ENCODE measurements at regions of chr13 and their contacts with region 1.

Region 1: GRCh38 chr13:26707122-26708006 is 53.2 kb downstream of the GPR12 start:
- DNase-seq: peak in 1 of 2 experiments; percentile 41
- H3K4me3 ChIP-seq: no peak overlapping the region
- H3K27ac ChIP-seq: no peak overlapping the region
- H3K4me1 ChIP-seq: peaks cover 1 to 10% (median 4%) of the 10 kb centered on the region in 4 experiments; a peak in 5 of 7 replicates
- H3K27me3 ChIP-seq: no peaks in the 10 kb centered on the region
- CTCF ChIP-seq: peak; percentile 41 to 92 (median 81)
- EP300 ChIP-seq: no peak
- POLR2A ChIP-seq: no peak
- RAD21 ChIP-seq: peak; percentile 96 to 97

Region 2: DNA sequence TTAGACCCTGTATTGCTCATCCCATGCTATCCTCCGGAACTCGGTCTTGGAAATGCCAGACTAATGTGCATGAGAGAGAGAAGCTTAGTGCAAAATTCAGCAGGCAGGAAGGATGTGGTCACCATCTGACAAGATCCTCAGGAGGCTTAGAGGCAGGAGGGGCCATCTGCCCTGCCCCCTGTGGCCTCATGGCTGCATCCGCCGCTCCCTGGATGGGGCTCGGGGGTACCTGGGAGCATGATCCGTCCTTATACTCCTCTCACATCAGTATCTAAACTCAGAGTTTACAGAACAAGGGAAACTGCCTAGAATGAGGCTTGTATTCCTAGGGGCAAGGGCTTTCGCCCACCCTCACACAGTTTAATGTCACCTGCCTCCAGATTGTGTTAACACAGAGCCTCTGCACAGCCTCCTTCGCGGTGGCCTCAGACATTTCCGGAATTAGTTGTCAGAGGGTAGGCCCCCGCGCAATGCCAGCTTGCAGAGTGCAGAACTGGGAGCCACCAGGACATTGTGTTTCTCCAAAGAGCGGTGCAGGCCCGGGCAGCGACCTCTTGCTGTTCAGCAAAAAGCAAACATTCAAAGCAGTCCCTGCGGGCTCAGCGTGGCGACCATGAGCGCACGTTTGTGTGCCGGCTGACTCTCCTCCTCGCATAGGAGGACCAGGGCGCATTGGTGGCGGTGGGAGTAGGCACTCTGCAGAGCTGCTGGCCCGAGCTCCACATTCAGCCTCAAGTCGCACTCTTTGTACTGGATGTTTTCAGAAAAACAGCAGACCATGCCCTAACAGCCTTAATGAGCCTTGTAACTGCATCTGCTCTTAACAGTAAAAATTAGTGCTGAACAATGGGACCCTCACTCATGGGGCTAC is 14.1 kb after region 1 on chr13:
- CTCF ChIA-PET with region 1: interaction called, 38 read pairs
- POLR2A ChIA-PET with region 1: no interaction called
- DNase-seq: no peak
- H3K4me3 ChIP-seq: no peak overlapping the region; a peak in 1 of 8 replicates
- H3K27ac ChIP-seq: no peak overlapping the region
- H3K4me1 ChIP-seq: no peaks in the 10 kb centered on the region
- H3K27me3 ChIP-seq: no peaks in the 10 kb centered on the region
- CTCF ChIP-seq: no peak
- EP300 ChIP-seq: no peak
- POLR2A ChIP-seq: no peak
- RAD21 ChIP-seq: no peak

Region 3: GRCh38 chr13:26749285-26749684 is 41.9 kb after region 1 on chr13:
- CTCF ChIA-PET with region 1: interaction called, 11 read pairs
- POLR2A ChIA-PET with region 1: no interaction called
- DNase-seq: no peak
- H3K4me3 ChIP-seq: no peak overlapping the region
- H3K27ac ChIP-seq: no peak overlapping the region
- H3K4me1 ChIP-seq: peaks cover 0 to 3% (median 0%) of the 10 kb centered on the region in 4 experiments; a peak in 2 of 7 replicates
- H3K27me3 ChIP-seq: peaks cover 0 to 3% (median 1%) of the 10 kb centered on the region in 4 experiments; a peak in 3 of 7 replicates
- CTCF ChIP-seq: no peak
- EP300 ChIP-seq: no peak
- POLR2A ChIP-seq: no peak
- RAD21 ChIP-seq: no peak

Region 4: DNA sequence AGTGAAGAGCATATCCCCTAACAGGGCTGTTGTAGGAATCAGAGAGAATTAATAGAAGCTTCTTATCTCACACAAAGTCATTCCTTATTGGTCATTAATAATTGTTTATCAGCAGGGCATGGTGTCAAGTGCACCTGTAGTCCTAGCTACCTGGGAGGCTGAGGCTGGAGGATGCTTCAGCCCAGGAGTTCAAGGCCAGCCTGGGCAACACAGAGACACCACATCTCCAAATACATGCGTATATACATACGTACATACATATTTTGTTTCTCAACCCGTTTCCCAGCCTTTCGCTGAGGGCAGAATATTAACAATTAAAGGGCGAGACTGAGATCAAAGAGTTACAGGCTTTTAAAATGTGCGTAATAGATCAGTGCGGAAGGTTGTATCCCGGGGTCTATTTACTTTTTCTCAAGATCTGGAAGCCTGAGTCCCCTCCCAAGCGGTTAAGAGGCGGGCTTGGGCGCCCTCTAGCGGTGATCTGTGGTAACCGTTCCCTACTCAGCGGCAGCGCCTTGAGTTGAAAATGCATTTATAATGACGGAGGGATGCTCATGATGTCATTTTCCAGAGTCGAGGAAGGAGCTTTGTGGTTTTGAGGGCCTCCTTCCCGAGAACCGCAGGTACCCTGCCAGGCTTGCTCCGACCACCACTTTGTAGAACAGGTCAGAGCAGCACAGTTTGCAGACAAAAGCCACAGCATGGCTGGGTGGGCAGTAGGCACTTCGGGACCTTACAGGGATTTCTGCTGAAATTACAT is 222.8 kb after region 1 on chr13:
- CTCF ChIA-PET with region 1: interaction called, 31 read pairs
- POLR2A ChIA-PET with region 1: no interaction called
- DNase-seq: peak; percentile 56 to 96
- H3K4me3 ChIP-seq: peak overlapping the region in 3 of 4 experiments; percentile 20 to 51 (median 23); a peak in 4 of 8 replicates
- H3K27ac ChIP-seq: no peak overlapping the region
- H3K4me1 ChIP-seq: peaks cover 0 to 3% (median 0%) of the 10 kb centered on the region in 4 experiments; a peak in 1 of 7 replicates
- H3K27me3 ChIP-seq: no peaks in the 10 kb centered on the region
- CTCF ChIP-seq: peak; percentile 80 to 86 (median 84)
- EP300 ChIP-seq: no peak
- POLR2A ChIP-seq: no peak; a peak in 1 of 3 replicates
- RAD21 ChIP-seq: peak; percentile 88 to 95

Measured in H1 (cell line).